ENCODE measurements at regions of chr11 and their contacts with region 1.

Region 1: GRCh38 chr11:64787526-64788320 is 9.4 kb upstream of the SF1 start:
- DNase-seq: peak in 8 of 9 donors; percentile 28 to 65 (median 54)
- ATAC-seq: peak; percentile 90
- H3K4me3 ChIP-seq: no peak overlapping the region
- H3K4me3 Mint-ChIP-seq: no peak overlapping the region
- H3K27ac ChIP-seq: peak overlapping the region; percentile 16
- H3K27ac Mint-ChIP-seq: peak overlapping the region; percentile 18 to 90 (median 74)
- H3K4me1 ChIP-seq: peaks cover 0 to 7% of the 10 kb centered on the region in 2 donors
- H3K4me1 Mint-ChIP-seq: peaks cover 1 to 11% (median 5%) of the 10 kb centered on the region in 7 donors
- H3K27me3 ChIP-seq: no peaks in the 10 kb centered on the region
- H3K27me3 Mint-ChIP-seq: no peaks in the 10 kb centered on the region

Region 2: DNA sequence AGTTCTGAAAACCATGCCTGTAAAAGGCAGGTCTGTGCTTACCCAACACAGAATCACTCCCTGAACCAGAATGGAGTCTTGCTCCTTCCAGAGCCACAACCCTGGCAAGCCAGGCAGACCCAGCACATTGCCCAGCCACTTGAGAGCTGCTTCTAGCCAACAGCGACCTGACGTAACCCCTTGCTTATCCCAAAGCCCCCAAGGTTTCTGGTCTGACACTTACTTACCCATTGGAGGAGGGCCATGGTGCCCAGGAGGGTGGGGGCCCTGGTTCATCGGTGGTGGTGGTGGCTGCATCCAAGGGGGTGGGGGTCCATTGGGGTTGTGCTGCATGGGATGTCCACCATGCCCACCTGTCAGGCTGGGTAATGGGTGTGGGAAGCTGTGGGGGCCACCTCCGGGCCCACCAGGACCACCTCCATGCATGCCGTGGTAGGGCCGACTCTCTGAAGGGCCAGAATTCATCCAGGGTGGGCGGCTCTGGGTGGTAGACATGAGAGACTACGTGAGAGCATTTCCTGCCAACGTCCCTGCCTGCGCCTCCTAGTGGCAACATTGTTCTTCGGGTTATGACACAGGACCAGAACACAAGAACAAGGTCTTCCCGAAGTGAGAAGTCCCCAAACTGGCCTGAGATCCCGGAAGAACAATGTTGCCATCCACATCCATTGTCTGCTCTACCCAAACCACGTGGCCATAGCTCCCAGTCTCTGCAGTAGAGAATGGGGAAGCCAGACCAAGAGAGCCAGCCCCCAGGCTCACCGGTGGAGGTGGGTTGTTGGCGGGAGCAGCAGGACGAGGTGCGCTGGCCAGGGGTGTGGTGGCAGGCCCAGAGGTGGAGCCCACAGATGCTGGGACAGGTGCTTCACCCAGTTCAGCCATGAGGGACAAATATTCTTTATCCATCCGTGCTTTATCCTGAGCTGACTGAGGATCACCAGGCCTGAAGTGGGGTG is 20.1 kb before region 1 on chr11:
- CTCF ChIA-PET with region 1: interaction called, 13 read pairs
- POLR2A ChIA-PET with region 1: interaction called, 14 read pairs
- intact Hi-C with region 1: no loop called
- DNase-seq: peak; percentile 65 to 86 (median 78)
- ATAC-seq: peak; percentile 53
- H3K4me3 ChIP-seq: no peak overlapping the region
- H3K4me3 Mint-ChIP-seq: peak overlapping the region; percentile 51 to 96 (median 78)
- H3K27ac ChIP-seq: peak overlapping the region; percentile 69
- H3K27ac Mint-ChIP-seq: peak overlapping the region; percentile 79 to 97 (median 90)
- H3K4me1 ChIP-seq: peaks cover 54 to 84% of the 10 kb centered on the region in 2 donors
- H3K4me1 Mint-ChIP-seq: peaks cover 59 to 97% (median 88%) of the 10 kb centered on the region in 7 donors
- H3K27me3 ChIP-seq: no peaks in the 10 kb centered on the region
- H3K27me3 Mint-ChIP-seq: no peaks in the 10 kb centered on the region

Region 3: GRCh38 chr11:64803163-64803845 is 15.6 kb after region 1 on chr11 and contains the start of gene MAP4K2:
- CTCF ChIA-PET with region 1: interaction called, 8 read pairs
- POLR2A ChIA-PET with region 1: interaction called, 17 read pairs
- intact Hi-C with region 1: no loop called
- DNase-seq: peak; percentile 80 to 96 (median 87)
- ATAC-seq: peak; percentile 98
- H3K4me3 ChIP-seq: peak within 1 kb of the TSS; percentile 91
- H3K4me3 Mint-ChIP-seq: peak within 1 kb of the TSS; percentile 85 to 92 (median 88)
- H3K27ac ChIP-seq: peak within 1 kb of the TSS; percentile 98
- H3K27ac Mint-ChIP-seq: peak within 1 kb of the TSS; percentile 82 to 97 (median 95)
- H3K4me1 ChIP-seq: peaks cover 9 to 23% of the 10 kb centered on the region in 2 donors
- H3K4me1 Mint-ChIP-seq: peaks cover 27 to 43% (median 32%) of the 10 kb centered on the region in 7 donors
- H3K27me3 ChIP-seq: no peaks in the 10 kb centered on the region
- H3K27me3 Mint-ChIP-seq: no peaks in the 10 kb centered on the region
- total RNA-seq, gene MAP4K2: 75.2 to 130 (median 84.3) TPM

Region 4: GRCh38 chr11:64894070-64894796 is 106.5 kb after region 1 on chr11:
- CTCF ChIA-PET with region 1: no interaction called
- POLR2A ChIA-PET with region 1: no interaction called
- intact Hi-C with region 1: loop called (anchors 1 kb)
- DNase-seq: peak; percentile 75 to 93 (median 87)
- ATAC-seq: peak; percentile 89
- H3K4me3 ChIP-seq: no peak overlapping the region
- H3K4me3 Mint-ChIP-seq: peak overlapping the region in 1 of 10 donors; percentile 21
- H3K27ac ChIP-seq: no peak overlapping the region
- H3K27ac Mint-ChIP-seq: peak overlapping the region in 2 of 9 donors; percentile 45 to 75
- H3K4me1 ChIP-seq: peaks cover 0 to 6% of the 10 kb centered on the region in 2 donors
- H3K4me1 Mint-ChIP-seq: peaks cover 0 to 6% (median 0%) of the 10 kb centered on the region in 7 donors
- H3K27me3 ChIP-seq: no peaks in the 10 kb centered on the region
- H3K27me3 Mint-ChIP-seq: no peaks in the 10 kb centered on the region

Region 5: GRCh38 chr11:64924102-64924851 is 136.6 kb after region 1 on chr11 and contains the start of gene PPP2R5B:
- CTCF ChIA-PET with region 1: no interaction called
- POLR2A ChIA-PET with region 1: no interaction called
- intact Hi-C with region 1: no loop called
- DNase-seq: peak; percentile 79 to 92 (median 89)
- ATAC-seq: peak; percentile 95
- H3K4me3 ChIP-seq: peak within 1 kb of the TSS; percentile 67
- H3K4me3 Mint-ChIP-seq: peak within 1 kb of the TSS; percentile 89 to 99 (median 96)
- H3K27ac ChIP-seq: peak within 1 kb of the TSS; percentile 81
- H3K27ac Mint-ChIP-seq: peak within 1 kb of the TSS; percentile 95 to 100 (median 98)
- H3K4me1 ChIP-seq: peaks cover 11 to 15% of the 10 kb centered on the region in 2 donors
- H3K4me1 Mint-ChIP-seq: peaks cover 9 to 24% (median 14%) of the 10 kb centered on the region in 7 donors
- H3K27me3 ChIP-seq: no peaks in the 10 kb centered on the region
- H3K27me3 Mint-ChIP-seq: no peaks in the 10 kb centered on the region
- total RNA-seq, gene PPP2R5B: 11.9 to 19.1 (median 18.8) TPM